Activated CD4-positive, alpha-beta T cell treated with anti-CD3 and anti-CD28 coated beads, Interleukin-2, amount 10 ng/mL, durations not matched to agents 24 days and 14 days (primary cell): ENCODE measurements at regions of chr1 and their contacts with region 1.

Region 1: GRCh38 chr1:21022279-21023040 is 154.2 kb downstream of the EIF4G3 start:
- DNase-seq: peak; percentile 79
- H3K4me3 Mint-ChIP-seq: peak overlapping the region; percentile 70
- H3K27ac Mint-ChIP-seq: peak overlapping the region; percentile 88
- H3K4me1 Mint-ChIP-seq: peaks cover 20% of the 10 kb centered on the region
- H3K27me3 Mint-ChIP-seq: no peaks in the 10 kb centered on the region

Region 2: GRCh38 chr1:20992322-20993056 is 30.0 kb before region 1 on chr1:
- intact Hi-C with region 1: loop called (anchors 1 kb)
- DNase-seq: peak; percentile 51
- H3K4me3 Mint-ChIP-seq: peak overlapping the region; percentile 62
- H3K27ac Mint-ChIP-seq: peak overlapping the region; percentile 91
- H3K4me1 Mint-ChIP-seq: peaks cover 26% of the 10 kb centered on the region
- H3K27me3 Mint-ChIP-seq: no peaks in the 10 kb centered on the region

Region 3: DNA sequence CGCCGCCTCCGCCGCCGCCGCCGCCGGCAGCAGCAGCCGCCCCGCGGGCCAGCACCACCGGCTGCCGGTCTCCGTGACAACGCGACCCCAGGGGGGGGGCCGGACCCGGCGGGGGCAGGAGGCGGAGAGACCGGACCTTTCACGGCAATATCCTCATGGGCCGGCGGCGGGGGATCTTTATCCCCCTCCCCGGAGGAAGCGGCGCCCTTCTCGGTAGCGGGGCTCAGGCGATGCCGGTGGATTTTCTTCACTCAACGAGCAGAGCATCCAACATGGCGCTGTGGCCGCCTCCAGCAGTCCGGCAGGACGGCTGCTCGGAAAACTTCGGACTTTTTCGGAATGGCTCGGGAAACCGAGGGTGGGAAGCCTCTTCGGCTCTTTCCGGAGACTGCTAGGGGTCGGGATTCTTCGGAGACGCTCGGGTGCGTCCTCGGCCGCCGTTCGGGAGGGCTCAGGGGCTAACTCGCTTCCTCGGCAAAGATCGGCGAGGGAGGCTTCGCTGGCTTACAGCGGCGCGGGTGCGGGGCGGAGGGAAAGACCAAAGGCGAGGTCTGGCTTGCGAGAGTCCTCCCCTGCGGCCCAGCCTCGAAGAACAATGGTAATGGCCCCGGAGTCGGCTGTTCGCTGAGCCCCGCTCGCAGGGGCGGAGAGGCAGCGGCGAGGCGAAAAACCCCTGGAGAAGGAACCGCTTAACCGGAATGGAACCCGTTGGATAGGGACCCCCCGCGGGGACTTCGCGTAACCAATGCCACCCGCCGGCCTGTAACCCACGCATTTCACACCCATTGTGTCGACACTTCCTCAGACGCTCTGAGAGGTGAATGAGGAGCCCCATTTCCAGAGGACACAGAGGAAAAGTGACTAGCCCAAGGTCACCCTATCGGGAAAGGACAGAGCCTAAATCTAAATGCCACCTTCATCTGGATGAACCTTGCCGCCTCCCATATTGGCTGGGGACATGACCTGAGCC is 154.4 kb after region 1 on chr1 and contains the start of gene EIF4G3:
- intact Hi-C with region 1: loop called (anchors 5 kb)
- DNase-seq: peak; percentile 100
- H3K4me3 Mint-ChIP-seq: peak within 1 kb of the TSS; percentile 89
- H3K27ac Mint-ChIP-seq: peak within 1 kb of the TSS; percentile 91
- H3K4me1 Mint-ChIP-seq: peaks cover 20% of the 10 kb centered on the region
- H3K27me3 Mint-ChIP-seq: peaks cover 2% of the 10 kb centered on the region
- total RNA-seq, gene EIF4G3: 64.0 and 66.8 TPM in 2 replicates